ENCODE measurements at regions of chr6 and their contacts with region 1.

Region 1: GRCh38 chr6:127302728-127303660 is 36.3 kb downstream of the RNF146 start:
- DNase-seq: peak; percentile 78
- ATAC-seq: peak; percentile 92
- H3K4me3 ChIP-seq: no peak overlapping the region
- H3K4me3 Mint-ChIP-seq: no peak overlapping the region
- H3K27ac ChIP-seq: peak overlapping the region in 1 of 2 donors; percentile 21
- H3K27ac Mint-ChIP-seq: peak overlapping the region; percentile 53
- H3K4me1 ChIP-seq: peaks cover 3 to 5% of the 10 kb centered on the region in 2 donors
- H3K4me1 Mint-ChIP-seq: peaks cover 38% of the 10 kb centered on the region
- H3K27me3 ChIP-seq: no peaks in the 10 kb centered on the region
- H3K27me3 Mint-ChIP-seq: no peaks in the 10 kb centered on the region
- CTCF ChIP-seq: peak; percentile 90

Region 2: DNA sequence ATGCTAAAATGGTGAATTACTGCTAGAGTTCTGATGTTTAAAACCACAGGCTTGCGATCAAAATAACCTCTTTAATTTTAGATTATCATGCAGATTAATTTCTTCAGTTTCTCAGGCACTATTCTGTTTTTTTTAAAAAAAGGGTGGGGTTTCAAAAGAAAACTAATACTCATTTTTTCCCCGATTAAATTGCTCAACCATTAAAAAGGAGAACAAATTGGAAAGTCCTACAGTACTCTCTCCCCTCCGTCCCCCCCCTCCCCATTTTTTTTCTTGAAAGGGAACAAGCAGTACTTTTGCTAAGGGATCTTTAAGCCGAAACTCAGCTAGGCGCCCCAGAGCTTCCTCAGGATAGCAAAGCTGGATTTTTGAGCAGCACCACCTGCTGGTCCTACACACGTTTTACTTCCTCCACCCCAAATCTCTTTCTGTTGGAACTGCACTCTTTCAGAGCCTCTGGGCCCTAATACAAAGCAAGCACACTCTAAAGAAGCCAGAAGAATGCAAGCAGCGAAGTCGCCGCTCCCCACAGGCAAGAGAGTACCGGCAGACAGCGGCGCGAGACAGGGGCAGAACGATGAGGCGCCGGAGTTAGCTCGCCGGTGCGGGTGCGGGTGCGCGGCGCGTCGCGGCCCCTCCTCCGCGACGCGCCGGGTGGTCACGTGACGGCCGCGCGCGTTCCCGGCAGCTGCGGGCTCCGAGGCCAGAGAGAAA is 36.7 kb before region 1 on chr6 and contains the start of gene RNF146:
- CTCF ChIA-PET with region 1: interaction called, 24 read pairs
- POLR2A ChIA-PET with region 1: no interaction called
- intact Hi-C with region 1: loop called (anchors 5 kb)
- DNase-seq: peak; percentile 89
- ATAC-seq: peak; percentile 71
- H3K4me3 ChIP-seq: peak within 1 kb of the TSS; percentile 74 to 94 (median 93)
- H3K4me3 Mint-ChIP-seq: peak within 1 kb of the TSS; percentile 98
- H3K27ac ChIP-seq: peak within 1 kb of the TSS; percentile 94 to 98
- H3K27ac Mint-ChIP-seq: peak within 1 kb of the TSS; percentile 95
- H3K4me1 ChIP-seq: peaks cover 16 to 25% of the 10 kb centered on the region in 2 donors
- H3K4me1 Mint-ChIP-seq: peaks cover 39% of the 10 kb centered on the region
- H3K27me3 ChIP-seq: peaks cover 0 to 3% (median 0%) of the 10 kb centered on the region in 4 experiments
- H3K27me3 Mint-ChIP-seq: peaks cover 4% of the 10 kb centered on the region
- CTCF ChIP-seq: peak; percentile 76
- total RNA-seq, gene RNF146: 55.9 and 58.0 TPM in 2 replicates

Region 3: DNA sequence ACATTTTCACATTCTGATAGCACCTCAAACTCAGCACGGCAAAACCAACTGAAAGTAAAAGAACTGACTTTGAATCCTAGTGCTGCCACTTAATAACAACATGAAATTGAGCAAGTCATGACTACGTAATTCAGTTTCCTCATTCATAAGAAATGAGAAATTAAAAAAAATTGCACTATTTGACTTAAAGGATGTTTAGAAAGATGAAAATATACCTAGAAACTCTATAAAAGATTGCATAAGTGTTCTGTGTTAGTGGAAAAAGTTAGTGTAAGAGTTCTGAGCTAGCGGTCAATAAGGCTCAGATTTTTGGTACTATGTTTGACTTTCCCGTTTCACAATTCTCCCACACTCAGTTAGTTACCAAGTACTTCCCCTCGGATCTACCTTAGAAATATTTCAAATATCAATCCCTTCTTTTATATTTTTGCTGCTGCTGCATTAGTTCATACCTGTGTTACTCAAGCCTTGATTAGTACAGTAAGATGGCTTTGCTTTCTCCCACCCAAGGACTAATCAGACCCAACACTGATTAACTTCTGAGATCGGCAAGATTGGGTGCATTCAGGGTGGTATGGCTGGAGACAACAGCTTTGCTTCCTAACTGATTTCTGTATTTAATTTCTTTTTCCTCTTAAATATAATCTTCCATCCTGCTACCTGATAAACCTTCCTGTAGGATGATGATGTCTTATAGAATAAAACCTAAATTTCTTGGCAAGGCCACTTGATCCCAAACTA is 14.6 kb after region 1 on chr6:
- CTCF ChIA-PET with region 1: interaction called, 25 read pairs
- POLR2A ChIA-PET with region 1: no interaction called
- intact Hi-C with region 1: no loop called
- DNase-seq: no peak
- ATAC-seq: no peak
- H3K4me3 ChIP-seq: peak overlapping the region in 1 of 5 experiments; percentile 12
- H3K4me3 Mint-ChIP-seq: no peak overlapping the region
- H3K27ac ChIP-seq: no peak overlapping the region
- H3K27ac Mint-ChIP-seq: no peak overlapping the region
- H3K4me1 ChIP-seq: no peaks in the 10 kb centered on the region
- H3K4me1 Mint-ChIP-seq: peaks cover 5% of the 10 kb centered on the region
- H3K27me3 ChIP-seq: no peaks in the 10 kb centered on the region
- H3K27me3 Mint-ChIP-seq: no peaks in the 10 kb centered on the region
- CTCF ChIP-seq: no peak

Region 4: DNA sequence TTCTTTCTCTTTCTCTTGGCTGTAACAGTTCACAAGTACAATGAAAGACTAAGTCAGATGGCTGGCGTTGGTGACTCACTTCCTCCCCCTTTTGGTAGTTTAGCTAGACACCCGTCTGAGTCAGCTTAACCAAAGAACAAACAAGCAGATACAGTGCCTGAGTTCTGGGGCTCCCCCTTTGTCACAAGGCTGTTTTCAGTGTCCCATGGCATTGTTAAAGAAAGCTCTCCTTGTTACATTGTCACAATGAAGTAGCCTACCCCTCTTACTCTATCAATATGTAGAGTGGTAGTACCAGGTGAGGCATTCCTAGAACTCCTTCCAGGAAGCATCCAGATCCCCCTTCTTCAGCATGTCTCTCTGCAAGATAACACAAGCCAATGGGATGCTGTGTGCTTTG is 117.6 kb after region 1 on chr6:
- CTCF ChIA-PET with region 1: interaction called, 41 read pairs
- POLR2A ChIA-PET with region 1: interaction called, 5 read pairs
- intact Hi-C with region 1: loop called (anchors 1 kb)
- DNase-seq: peak; percentile 75
- ATAC-seq: peak; percentile 96
- H3K4me3 ChIP-seq: no peak overlapping the region
- H3K4me3 Mint-ChIP-seq: no peak overlapping the region
- H3K27ac ChIP-seq: no peak overlapping the region
- H3K27ac Mint-ChIP-seq: peak overlapping the region; percentile 12
- H3K4me1 ChIP-seq: peaks cover 13 to 17% of the 10 kb centered on the region in 2 donors
- H3K4me1 Mint-ChIP-seq: peaks cover 21% of the 10 kb centered on the region
- H3K27me3 ChIP-seq: no peaks in the 10 kb centered on the region
- H3K27me3 Mint-ChIP-seq: no peaks in the 10 kb centered on the region
- CTCF ChIP-seq: peak; percentile 69

Region 5: DNA sequence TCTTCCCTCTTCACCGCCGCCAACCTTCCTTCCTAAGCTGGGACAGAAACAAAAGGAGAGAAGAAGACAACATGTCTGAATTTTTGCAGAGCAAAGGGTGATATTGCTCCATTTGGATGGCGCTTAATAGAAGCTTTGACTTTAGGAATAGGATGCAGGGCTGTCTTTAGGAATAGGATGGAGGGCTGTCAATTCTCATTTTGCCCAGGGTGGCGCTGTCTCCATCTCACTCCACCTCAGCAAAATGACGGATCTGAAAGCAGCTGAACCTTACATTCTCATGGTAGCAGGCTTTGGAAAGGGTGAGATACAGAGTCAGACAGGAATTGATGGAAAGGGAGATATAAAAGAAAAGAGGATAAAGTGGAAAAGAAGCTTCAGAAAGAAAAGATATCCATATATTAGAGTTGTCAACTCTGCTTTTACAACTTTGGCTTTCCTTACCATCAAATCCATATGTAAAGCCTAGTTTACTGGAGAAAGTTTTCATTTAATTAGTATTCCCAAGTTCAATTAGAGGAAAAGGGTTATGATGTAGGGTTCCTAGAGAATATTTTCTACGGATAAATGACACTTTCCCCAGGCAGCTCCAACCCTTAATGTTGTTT is 213.8 kb after region 1 on chr6:
- CTCF ChIA-PET with region 1: interaction called, 3 read pairs
- POLR2A ChIA-PET with region 1: no interaction called
- intact Hi-C with region 1: loop called (anchors 5 kb)
- DNase-seq: peak; percentile 57
- ATAC-seq: peak; percentile 28
- H3K4me3 ChIP-seq: peak overlapping the region; percentile 30 to 72 (median 58)
- H3K4me3 Mint-ChIP-seq: peak overlapping the region; percentile 90
- H3K27ac ChIP-seq: no peak overlapping the region
- H3K27ac Mint-ChIP-seq: peak overlapping the region; percentile 4
- H3K4me1 ChIP-seq: peaks cover 24 to 36% of the 10 kb centered on the region in 2 donors
- H3K4me1 Mint-ChIP-seq: peaks cover 23% of the 10 kb centered on the region
- H3K27me3 ChIP-seq: peaks cover 2 to 57% (median 45%) of the 10 kb centered on the region in 4 experiments
- H3K27me3 Mint-ChIP-seq: peaks cover 53% of the 10 kb centered on the region
- CTCF ChIP-seq: peak; percentile 78